ENCODE measurements at regions of chr9 and their contacts with region 1.

Region 1: GRCh38 chr9:34069831-34070230 is 21.1 kb upstream of the UBAP2 start:
- DNase-seq: no peak

Region 2: DNA sequence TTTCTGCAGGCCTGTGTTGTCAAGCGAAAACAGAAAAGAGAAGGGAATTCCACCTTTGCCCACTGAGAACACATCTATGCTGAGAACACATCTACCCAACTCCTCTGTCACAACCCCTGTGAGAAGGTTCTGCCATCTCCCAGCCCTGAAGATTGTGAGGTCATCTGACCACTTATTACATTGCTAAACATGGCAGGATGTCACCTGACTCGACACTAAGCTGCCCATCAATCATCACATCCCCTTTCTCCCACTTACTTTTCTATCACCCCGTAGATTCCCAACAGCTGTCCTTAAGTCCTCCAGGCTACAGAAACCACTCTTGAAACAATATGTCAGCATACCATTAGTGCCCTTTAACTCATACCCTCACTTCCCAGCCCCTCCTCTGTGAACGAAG is 338.7 kb before region 1 on chr9:
- intact Hi-C with region 1: no loop called
- DNase-seq: no peak

Region 3: DNA sequence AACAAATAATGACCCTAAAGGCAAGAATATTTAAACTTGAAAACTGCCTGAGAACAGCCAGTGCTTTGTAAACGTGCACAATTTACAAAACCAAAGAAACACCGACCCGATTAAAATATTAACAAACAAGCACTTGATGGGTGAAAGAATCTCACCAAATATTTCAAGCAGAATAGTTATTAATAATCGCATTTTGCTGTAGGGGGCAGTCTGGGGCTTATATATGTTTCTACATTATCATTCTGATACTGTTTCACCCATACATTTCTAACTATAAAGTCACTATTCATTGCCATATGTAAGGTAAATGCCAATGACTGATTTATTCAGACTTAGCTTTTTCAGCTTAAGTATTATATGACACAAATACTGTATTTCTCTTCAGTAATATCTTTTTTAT is 58.9 kb before region 1 on chr9:
- intact Hi-C with region 1: loop called (anchors 10 kb)
- DNase-seq: no peak

Region 4: DNA sequence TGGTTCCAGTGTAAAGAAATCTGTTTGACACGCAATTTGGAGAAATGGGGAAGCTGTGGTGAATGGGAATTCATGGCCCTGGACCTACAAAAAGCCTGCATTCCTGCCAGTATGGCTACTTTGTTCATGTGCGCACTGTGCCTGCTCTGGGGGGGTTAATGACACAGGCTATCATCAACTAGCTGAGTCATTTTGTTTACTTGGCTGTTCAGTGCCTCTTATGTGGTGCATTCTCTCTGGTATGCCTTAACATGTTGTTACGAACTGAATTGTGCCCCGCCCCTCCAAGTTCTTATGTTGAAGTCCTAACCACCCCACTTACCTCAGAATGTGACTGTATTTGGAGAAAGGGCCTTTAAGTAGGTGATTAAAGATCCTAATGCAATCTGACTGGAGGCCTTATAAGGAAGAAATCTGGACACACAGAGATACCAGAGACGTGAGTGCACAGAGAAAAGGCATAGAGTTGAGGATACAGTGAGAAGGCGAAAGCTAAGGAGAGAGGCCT is 88.6 kb after region 1 on chr9:
- intact Hi-C with region 1: loop called (anchors 10 kb)
- DNase-seq: no peak